Activated CD8-positive, alpha-beta T cell treated with anti-CD3 and anti-CD28 coated beads for 36 hours (primary cell): ENCODE measurements at regions of chr11 and their contacts with region 1.

Region 1: DNA sequence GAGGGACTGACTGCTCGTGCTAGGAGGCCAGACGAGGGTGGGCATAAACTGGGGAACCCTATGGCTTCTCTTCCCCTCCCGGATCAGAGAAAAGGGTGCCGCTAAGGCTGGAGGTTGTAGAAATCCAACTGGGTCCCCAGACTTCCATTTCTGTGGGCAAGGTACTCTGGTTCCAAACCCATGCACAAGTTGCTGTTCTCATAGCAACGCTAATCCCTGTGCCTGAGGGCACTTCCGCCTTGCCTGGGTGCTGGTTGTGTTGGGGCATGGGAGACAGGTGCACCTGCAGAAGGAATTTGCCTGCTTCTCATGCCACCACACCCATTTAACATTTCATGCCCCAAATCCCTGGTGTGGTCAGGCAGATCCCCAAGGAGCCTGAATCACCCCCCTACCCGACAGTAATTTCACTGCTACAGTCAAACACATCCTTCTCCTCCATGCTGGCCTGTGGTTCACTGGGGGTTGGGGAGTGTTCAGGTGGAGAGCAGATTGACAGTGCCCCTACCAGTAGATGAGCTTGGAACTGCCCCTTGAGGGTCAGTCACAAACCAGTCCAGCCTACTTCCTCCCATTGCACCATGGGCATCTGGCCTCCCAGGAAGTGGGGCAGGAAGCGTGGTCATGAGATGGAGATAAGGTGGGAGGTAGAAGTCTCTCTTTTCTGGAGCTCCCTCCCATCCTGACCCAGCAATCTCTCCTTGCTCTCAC is 1.2 kb downstream of the C2CD2L start:
- DNase-seq: peak; percentile 55
- ATAC-seq: peak; percentile 18
- H3K4me3 Mint-ChIP-seq: peak overlapping the region; percentile 85
- H3K27ac Mint-ChIP-seq: peak overlapping the region; percentile 75
- H3K4me1 Mint-ChIP-seq: peaks cover 39% of the 10 kb centered on the region
- H3K27me3 Mint-ChIP-seq: no peaks in the 10 kb centered on the region
- CTCF ChIP-seq: no peak

Region 2: DNA sequence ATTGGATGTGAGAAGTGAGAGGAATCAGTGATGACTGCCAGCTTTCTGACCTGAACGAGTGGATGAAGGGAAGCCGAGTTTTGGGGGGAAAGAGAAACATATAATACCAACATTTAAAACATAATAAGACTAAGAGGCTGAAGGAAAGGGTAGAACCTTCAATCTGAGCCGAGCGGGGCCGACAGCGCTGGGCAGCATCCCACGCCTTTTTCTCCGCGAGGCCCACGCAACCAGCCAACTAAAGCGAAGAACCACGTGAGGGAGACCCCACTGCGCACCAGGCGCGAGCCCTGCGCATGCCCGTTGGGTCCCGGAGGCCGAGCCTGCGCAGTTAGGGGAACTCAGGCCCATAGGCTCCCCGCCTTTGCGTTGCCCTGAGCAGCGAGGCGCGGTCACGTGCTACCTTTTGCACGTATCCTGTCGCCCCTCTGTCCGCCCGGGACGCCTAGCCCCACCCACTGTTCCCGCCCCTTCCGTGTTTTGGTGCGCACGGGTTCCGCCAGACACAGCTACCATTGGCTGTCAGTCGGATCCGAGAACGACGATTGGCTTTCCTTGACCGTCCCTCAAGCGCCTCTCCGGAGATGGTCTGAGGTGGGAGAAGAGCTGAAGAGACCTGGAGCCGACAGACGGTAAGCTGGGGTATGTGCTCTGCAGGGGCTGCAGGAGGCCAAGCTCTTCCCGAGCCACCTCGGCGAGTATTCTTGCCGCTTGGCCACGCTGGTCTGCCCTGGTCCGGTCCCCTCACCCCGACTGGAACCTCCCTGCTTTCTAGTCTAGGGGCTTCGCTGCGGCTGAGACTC is 12.9 kb after region 1 on chr11 and contains the start of gene HINFP:
- CTCF ChIA-PET with region 1: interaction called, 5 read pairs
- POLR2A ChIA-PET with region 1: interaction called, 46 read pairs
- intact Hi-C with region 1: no loop called
- DNase-seq: peak; percentile 100
- ATAC-seq: peak; percentile 98
- H3K4me3 Mint-ChIP-seq: peak within 1 kb of the TSS; percentile 93
- H3K27ac Mint-ChIP-seq: peak within 1 kb of the TSS; percentile 89
- H3K4me1 Mint-ChIP-seq: peaks cover 29% of the 10 kb centered on the region
- H3K27me3 Mint-ChIP-seq: no peaks in the 10 kb centered on the region
- CTCF ChIP-seq: no peak
- total RNA-seq, gene HINFP: 23.9 to 26.5 TPM

Region 3: GRCh38 chr11:119149018-119149785 is 40.9 kb after region 1 on chr11 and contains the start of gene ABCG4:
- CTCF ChIA-PET with region 1: no interaction called
- POLR2A ChIA-PET with region 1: no interaction called
- intact Hi-C with region 1: no loop called
- DNase-seq: peak; percentile 29
- ATAC-seq: peak; percentile 56
- H3K4me3 Mint-ChIP-seq: peak within 1 kb of the TSS; percentile 62
- H3K27ac Mint-ChIP-seq: no peak within 1 kb of the TSS
- H3K4me1 Mint-ChIP-seq: peaks cover 12% of the 10 kb centered on the region
- H3K27me3 Mint-ChIP-seq: peaks cover 26% of the 10 kb centered on the region
- CTCF ChIP-seq: no peak
- total RNA-seq, gene ABCG4: not detected